Panc1 (cell line): ENCODE measurements at regions of chr6 and their contacts with region 1.

Region 1: GRCh38 chr6:108835218-108835850 is 12.9 kb upstream of the ARMC2 start:
- DNase-seq: peak; percentile 85
- ATAC-seq: peak; percentile 99
- H3K4me3 ChIP-seq: no peak overlapping the region
- H3K27ac ChIP-seq: no peak overlapping the region
- H3K4me1 ChIP-seq: no peaks in the 10 kb centered on the region
- H3K27me3 ChIP-seq: no peaks in the 10 kb centered on the region; the same call in 1 of the 2 replicates
- CTCF ChIP-seq: peak; percentile 98

Region 2: GRCh38 chr6:108268845-108269244 is 566.5 kb before region 1 on chr6:
- CTCF ChIA-PET with region 1: no interaction called
- POLR2A ChIA-PET with region 1: interaction called, 12 read pairs
- in situ Hi-C with region 1: no loop called
- intact Hi-C with region 1: no loop called
- DNase-seq: no peak
- ATAC-seq: no peak
- H3K4me3 ChIP-seq: no peak overlapping the region
- H3K27ac ChIP-seq: no peak overlapping the region
- H3K4me1 ChIP-seq: no peaks in the 10 kb centered on the region
- H3K27me3 ChIP-seq: no peaks in the 10 kb centered on the region
- CTCF ChIP-seq: no peak

Region 3: DNA sequence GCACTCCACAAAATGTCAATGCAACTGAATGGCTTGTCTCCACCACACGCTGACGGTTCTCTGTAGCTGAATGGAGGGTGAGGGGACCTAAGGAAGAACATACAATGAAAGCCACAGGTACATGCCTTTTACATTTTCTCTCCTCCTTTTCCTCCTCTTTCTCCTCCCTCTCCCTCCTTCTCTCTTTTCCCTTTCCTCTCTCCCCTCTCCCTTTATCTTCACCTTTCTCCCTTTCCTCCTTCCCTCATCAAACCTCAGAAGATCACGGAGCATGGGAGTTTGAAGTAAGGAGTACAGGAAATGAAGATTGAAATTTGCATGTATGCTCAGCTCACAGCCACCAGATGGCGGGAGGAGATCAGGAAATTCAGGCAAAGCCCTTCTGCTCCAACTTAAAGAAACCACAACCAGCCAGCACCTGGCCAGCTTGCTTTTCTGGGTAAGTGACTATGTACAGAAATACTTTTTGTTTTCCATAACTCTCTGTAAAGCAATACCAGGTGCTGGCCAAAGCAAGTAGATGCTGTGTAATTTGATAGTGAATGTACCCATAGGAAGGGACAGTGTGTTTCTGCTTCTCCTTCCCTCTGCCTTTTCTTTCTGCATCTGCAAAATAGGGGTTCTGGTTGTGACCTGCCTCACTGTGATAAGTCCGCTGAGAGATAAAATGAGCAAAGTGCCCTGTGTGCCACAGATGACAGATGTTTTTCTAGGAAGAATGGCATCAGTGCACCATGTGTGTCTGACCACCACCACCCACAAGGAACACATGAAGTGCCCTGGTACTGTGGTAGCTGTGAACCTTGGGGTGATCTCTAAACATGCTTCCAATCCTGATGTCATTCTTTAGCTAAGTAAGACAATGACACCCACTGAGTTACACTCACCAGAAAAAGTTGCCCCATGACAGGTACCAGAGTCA is 293.2 kb before region 1 on chr6:
- CTCF ChIA-PET with region 1: interaction called, 4 read pairs
- POLR2A ChIA-PET with region 1: no interaction called
- in situ Hi-C with region 1: no loop called
- intact Hi-C with region 1: loop called (anchors 1 kb)
- DNase-seq: no peak
- ATAC-seq: peak; percentile 93
- H3K4me3 ChIP-seq: peak overlapping the region; percentile 5 to 35
- H3K27ac ChIP-seq: no peak overlapping the region
- H3K4me1 ChIP-seq: no peaks in the 10 kb centered on the region
- H3K27me3 ChIP-seq: no peaks in the 10 kb centered on the region
- CTCF ChIP-seq: peak; percentile 95

Region 4: DNA sequence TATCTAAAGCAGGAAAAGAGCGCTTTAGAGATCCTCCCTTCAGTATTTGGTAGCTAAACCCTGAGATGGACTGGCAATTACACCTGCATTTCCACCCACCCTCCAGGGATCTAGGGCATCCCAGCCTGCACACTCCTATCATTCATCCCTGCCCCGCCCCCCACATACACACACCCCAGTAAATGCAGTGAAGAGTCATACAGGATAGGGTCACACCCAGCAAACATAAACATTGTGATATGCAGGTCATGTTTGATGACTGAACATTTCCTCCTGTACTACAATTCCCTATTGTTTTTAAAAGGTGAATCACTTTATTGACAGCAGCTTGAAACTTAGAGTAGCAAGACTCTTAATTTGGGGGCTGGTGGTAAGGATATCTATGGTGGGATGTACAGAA is 161.7 kb before region 1 on chr6:
- CTCF ChIA-PET with region 1: no interaction called
- POLR2A ChIA-PET with region 1: interaction called, 10 read pairs
- in situ Hi-C with region 1: no loop called
- intact Hi-C with region 1: no loop called
- DNase-seq: peak; percentile 71
- ATAC-seq: peak; percentile 73
- H3K4me3 ChIP-seq: no peak overlapping the region
- H3K27ac ChIP-seq: no peak overlapping the region
- H3K4me1 ChIP-seq: peaks cover 41% of the 10 kb centered on the region
- H3K27me3 ChIP-seq: no peaks in the 10 kb centered on the region
- CTCF ChIP-seq: no peak

Region 5: GRCh38 chr6:108737594-108738546 is 97.5 kb before region 1 on chr6:
- CTCF ChIA-PET with region 1: no interaction called
- POLR2A ChIA-PET with region 1: no interaction called
- in situ Hi-C with region 1: no loop called
- intact Hi-C with region 1: no loop called
- DNase-seq: peak; percentile 92
- ATAC-seq: peak; percentile 40
- H3K4me3 ChIP-seq: peak overlapping the region in 1 of 2 experiments; percentile 12; a peak in 2 of 4 replicates
- H3K27ac ChIP-seq: peak overlapping the region; percentile 37
- H3K4me1 ChIP-seq: peaks cover 12% of the 10 kb centered on the region; the same call in 1 of the 2 replicates
- H3K27me3 ChIP-seq: no peaks in the 10 kb centered on the region
- CTCF ChIP-seq: no peak; the same call in 1 of the 2 replicates

Region 6: DNA sequence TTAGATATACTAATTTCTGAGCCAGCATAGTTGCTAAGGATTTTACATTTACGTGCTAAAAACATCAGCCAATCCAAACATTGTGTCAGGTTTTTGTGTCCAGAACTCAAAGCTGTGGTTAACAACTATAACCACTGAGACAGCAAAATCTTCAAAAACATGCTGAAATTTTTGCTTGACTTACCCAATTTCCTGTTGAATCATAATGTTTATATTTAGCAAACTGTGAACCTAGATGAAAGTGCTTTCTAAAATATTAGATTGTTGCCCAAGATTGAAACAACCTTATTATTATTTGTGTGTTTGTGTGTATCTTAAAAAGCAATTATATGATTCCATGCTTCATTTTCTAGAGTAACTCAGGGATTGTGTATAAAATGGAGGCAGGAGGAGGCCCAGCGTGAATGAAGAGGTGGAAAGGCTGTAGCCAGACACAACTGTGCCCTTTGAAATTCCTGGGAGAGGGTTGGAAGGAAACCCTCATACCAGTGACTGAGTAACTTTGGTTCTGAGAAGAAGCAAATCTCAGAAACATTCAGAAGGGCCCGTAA is 60.9 kb after region 1 on chr6:
- CTCF ChIA-PET with region 1: interaction called, 14 read pairs
- POLR2A ChIA-PET with region 1: no interaction called
- in situ Hi-C with region 1: no loop called
- intact Hi-C with region 1: loop called (anchors 5 kb)
- DNase-seq: no peak
- ATAC-seq: no peak
- H3K4me3 ChIP-seq: no peak overlapping the region
- H3K27ac ChIP-seq: no peak overlapping the region
- H3K4me1 ChIP-seq: no peaks in the 10 kb centered on the region
- H3K27me3 ChIP-seq: no peaks in the 10 kb centered on the region
- CTCF ChIP-seq: no peak

Region 7: DNA sequence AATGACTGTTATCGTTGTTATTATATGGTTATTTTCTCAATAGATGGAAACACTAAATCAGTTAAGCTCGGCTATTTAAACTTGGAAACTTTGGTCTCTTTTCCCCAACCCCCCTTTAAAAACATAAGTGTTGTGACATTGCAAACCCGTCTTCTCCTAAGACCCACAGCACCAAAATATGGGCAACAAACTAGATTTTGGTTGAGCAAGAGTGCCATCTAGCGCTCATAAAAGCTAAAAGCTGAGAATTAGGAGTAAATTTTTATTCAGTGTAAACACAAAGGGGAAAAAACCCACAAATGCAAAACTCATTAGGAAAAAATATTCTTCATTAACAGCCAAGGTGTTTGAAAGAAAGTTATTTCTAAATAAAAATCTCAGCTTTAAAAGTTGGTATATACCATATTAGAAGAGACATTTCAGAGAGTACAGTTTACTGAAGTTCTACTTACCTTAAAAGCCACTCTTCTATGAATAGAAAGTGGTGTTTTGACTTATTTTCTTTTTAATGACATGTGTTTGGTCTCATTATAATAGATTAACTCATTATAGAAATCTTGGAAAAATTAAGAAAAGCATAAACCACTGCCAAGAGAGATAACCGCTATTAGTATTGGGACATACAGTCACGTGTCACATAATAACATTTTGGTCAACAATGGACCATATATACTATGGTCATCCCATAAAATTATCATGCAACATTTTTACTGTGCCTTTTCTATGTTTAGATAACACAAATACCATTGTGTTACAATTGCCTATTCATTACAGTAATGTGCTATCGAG is 238.2 kb after region 1 on chr6:
- CTCF ChIA-PET with region 1: interaction called, 6 read pairs
- POLR2A ChIA-PET with region 1: no interaction called
- in situ Hi-C with region 1: no loop called
- intact Hi-C with region 1: loop called (anchors 2 kb)
- DNase-seq: peak; percentile 60
- ATAC-seq: peak; percentile 82
- H3K4me3 ChIP-seq: no peak overlapping the region
- H3K27ac ChIP-seq: no peak overlapping the region
- H3K4me1 ChIP-seq: peaks cover 3% of the 10 kb centered on the region; the same call in 1 of the 2 replicates
- H3K27me3 ChIP-seq: no peaks in the 10 kb centered on the region
- CTCF ChIP-seq: peak; percentile 81; the same call in 1 of the 2 replicates